Thyroid gland (tissue), 4 donors: ENCODE measurements at regions of chr12 and their contacts with region 1.

Region 1: DNA sequence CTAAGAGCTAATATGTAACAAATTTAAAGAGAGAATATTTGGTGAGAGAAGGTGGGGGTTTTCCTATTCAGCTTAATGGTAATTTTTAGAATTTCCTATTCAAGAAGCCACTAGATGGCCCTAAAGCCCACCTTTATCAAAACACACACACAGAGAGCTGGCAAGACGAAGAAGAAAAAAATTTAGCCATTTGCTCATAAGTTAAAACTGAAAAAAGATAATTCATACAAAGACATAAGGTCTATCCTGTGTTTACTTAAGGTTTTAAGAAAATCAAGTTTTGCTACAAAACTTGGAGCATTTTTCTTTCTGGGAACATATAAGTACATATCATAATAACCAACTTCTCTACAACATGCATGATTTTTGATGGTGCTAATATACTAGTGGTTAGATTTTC is 46.8 kb upstream of the PCED1B start:
- DNase-seq: no peak
- H3K4me3 ChIP-seq: no peak overlapping the region
- H3K27ac ChIP-seq: no peak overlapping the region
- H3K4me1 ChIP-seq: no peaks in the 10 kb centered on the region
- H3K27me3 ChIP-seq: no peaks in the 10 kb centered on the region
- CTCF ChIP-seq: peak in 5 of 6 experiments; percentile 21 to 70 (median 52)
- POLR2A ChIP-seq: no peak

Region 2: DNA sequence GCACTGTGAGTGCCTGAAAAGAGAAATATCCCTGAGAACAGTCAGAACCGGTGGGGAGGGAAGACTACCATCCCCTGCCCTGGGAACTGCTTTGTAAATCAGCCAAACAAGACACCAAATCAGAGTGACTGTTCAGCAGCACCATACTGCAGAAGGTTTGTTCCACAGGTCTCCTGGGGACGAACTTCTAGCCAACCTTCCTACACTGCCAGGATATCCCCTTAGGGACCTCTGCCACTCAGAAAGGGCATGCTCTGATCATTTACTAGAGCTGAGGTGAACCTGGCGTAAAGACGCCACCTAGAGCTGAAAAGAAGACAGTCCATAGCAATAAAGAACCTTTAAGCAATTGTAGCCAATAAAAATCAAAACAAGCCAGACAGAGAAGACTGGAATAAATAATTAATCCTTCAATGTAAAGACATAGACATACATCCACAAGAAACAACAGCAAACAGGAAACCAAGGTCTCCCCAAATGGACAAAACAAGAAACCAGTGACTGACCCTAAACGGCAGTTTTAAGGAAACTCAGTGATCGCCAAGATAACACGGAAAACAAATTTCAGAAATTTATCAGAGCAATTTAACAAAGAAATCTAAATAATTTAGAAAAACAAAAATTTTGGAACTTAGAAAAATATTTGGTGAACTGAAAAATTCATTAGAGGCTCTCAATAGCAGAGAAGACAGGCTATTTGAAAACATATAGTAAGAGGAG is 275.2 kb after region 1 on chr12:
- intact Hi-C with region 1: loop called (anchors 5 kb)
- DNase-seq: peak; percentile 44 to 53
- H3K4me3 ChIP-seq: no peak overlapping the region
- H3K27ac ChIP-seq: no peak overlapping the region
- H3K4me1 ChIP-seq: no peaks in the 10 kb centered on the region
- H3K27me3 ChIP-seq: no peaks in the 10 kb centered on the region
- CTCF ChIP-seq: peak; percentile 19 to 84 (median 66)
- POLR2A ChIP-seq: no peak

Region 3: DNA sequence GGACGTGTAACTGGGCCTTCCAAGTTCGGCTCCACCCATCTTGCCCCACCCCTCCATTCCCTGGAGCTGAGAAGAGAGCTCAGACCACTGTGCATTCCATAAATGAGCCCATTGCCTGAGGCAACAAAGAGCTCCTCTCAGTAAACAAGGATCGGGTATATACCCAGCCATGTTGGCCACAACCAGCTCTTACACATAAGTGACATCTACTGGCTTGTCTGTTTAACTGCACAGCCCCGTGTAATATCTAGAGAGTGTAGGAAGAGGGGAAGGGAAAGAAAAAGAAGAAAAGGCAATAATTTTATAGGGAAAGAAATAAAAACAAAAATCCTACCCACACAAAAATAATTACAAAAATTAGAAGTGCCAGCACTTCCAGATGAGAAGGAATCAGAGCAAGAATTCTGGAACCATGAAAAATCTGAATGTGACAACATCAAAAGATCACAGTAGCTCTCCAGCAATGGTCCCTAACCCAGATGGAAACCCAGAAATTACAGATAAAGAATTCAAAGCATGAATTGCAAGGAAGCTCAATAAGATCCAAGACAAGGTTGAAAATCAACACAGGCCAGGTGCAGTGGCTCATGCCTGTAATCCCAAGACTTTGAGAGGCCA is 365.1 kb after region 1 on chr12:
- intact Hi-C with region 1: loop called (anchors 10 kb)
- DNase-seq: no peak
- H3K4me3 ChIP-seq: no peak overlapping the region
- H3K27ac ChIP-seq: no peak overlapping the region
- H3K4me1 ChIP-seq: no peaks in the 10 kb centered on the region
- H3K27me3 ChIP-seq: no peaks in the 10 kb centered on the region
- CTCF ChIP-seq: peak in 3 of 6 experiments; percentile 7 to 22 (median 12)
- POLR2A ChIP-seq: no peak